Naive thymus-derived CD4-positive, alpha-beta T cell (primary cell): ENCODE measurements at regions of chr10 and their contacts with region 1.

Region 1: DNA sequence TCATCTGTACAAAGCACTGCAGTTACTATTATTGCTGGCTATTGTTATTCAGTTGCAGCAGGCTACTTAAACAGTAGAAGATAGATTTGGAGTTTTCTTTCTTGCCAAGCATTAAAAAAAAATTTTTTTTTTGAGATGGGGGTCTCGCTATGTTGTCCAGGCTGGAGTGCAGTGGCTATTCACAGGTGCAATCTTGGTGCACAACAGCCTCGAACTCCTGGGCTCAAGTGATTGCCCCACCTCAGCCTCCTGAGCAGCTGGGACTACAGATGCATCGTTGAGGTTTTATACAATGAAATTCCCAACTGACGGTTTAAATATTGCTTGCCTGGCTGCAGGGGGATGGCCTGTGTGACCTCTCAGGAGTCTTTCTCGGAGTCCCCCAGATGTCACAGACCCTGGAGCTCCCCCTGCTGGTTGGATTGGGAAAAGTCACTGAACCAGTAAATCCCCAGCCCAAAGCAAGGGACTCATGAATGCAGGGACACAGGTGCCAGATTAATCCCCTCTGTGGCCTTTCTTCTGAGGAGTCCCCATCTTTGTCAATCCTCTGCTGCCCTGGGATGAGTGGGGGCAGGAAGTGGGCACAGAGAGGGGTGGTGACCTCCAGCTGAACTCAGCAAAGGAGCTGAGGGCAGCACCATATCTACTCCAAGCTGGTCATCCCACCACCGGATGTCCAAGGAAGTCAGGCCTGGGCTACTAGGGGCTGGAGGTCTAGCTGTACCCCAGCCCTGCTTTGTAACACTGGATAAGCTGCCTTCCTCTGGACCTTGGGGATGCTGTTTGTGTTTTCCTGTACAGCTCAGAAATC is 149.6 kb downstream of the C10orf105 start:
- DNase-seq: peak; percentile 39 to 81 (median 64)
- ATAC-seq: peak; percentile 67
- H3K4me3 ChIP-seq: no peak overlapping the region
- H3K4me3 Mint-ChIP-seq: no peak overlapping the region
- H3K27ac ChIP-seq: no peak overlapping the region
- H3K27ac Mint-ChIP-seq: no peak overlapping the region
- H3K4me1 ChIP-seq: no peaks in the 10 kb centered on the region
- H3K4me1 Mint-ChIP-seq: peaks cover 0 to 4% (median 0%) of the 10 kb centered on the region in 7 donors
- H3K27me3 ChIP-seq: no peaks in the 10 kb centered on the region
- H3K27me3 Mint-ChIP-seq: no peaks in the 10 kb centered on the region

Region 2: DNA sequence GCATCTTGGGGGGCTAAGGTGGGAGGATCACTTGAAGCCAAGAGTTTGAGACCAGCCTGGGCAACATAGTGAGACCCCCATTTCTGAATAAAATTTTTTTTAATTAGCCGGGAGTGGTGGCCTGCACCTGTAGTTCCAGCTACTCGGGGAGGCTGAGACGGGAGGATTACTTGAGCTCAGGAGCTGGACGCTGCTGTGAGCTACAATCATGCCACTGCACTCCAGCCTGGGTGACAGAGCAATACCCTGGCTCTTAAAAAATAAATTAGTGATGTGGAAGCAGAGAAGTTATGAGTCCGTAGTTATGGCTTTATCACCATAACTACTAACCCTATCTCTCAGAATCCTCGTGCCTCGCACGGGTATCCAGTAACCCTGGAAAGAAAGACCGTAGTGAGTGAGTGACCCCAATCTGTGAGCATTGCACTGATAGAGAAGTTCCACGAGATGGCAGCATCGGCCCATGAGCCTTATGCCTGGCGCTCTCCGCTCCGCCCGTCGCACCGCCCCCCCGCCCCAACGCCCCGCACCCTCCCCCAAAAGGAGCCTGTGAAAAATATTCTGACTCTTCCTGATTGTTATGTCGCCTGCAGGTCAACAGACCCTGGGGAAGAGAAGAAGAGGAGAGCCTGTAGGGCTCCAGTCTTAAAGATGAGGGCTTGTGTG is 255.8 kb before region 1 on chr10:
- CTCF ChIA-PET with region 1: interaction called, 64 read pairs
- POLR2A ChIA-PET with region 1: no interaction called
- intact Hi-C with region 1: loop called (anchors 1 kb)
- DNase-seq: peak; percentile 18 to 56 (median 49)
- ATAC-seq: peak; percentile 62
- H3K4me3 ChIP-seq: no peak overlapping the region
- H3K4me3 Mint-ChIP-seq: peak overlapping the region in 3 of 10 donors; percentile 3 to 48 (median 25)
- H3K27ac ChIP-seq: no peak overlapping the region
- H3K27ac Mint-ChIP-seq: peak overlapping the region in 1 of 9 donors; percentile 55
- H3K4me1 ChIP-seq: peaks cover 5 to 6% of the 10 kb centered on the region in 2 donors
- H3K4me1 Mint-ChIP-seq: peaks cover 0 to 26% (median 13%) of the 10 kb centered on the region in 7 donors
- H3K27me3 ChIP-seq: no peaks in the 10 kb centered on the region
- H3K27me3 Mint-ChIP-seq: peaks cover 0 to 16% (median 14%) of the 10 kb centered on the region in 5 donors

Region 3: GRCh38 chr10:71319042-71319799 is 250.8 kb before region 1 on chr10 and contains the start of gene SLC29A3:
- CTCF ChIA-PET with region 1: interaction called, 64 read pairs
- POLR2A ChIA-PET with region 1: no interaction called
- intact Hi-C with region 1: loop called (anchors 1 kb)
- DNase-seq: peak; percentile 45 to 85 (median 70)
- ATAC-seq: peak; percentile 91
- H3K4me3 ChIP-seq: peak within 1 kb of the TSS; percentile 81
- H3K4me3 Mint-ChIP-seq: peak within 1 kb of the TSS; percentile 85 to 97 (median 94)
- H3K27ac ChIP-seq: peak within 1 kb of the TSS; percentile 62
- H3K27ac Mint-ChIP-seq: peak within 1 kb of the TSS; percentile 71 to 94 (median 85)
- H3K4me1 ChIP-seq: peaks cover 5 to 10% of the 10 kb centered on the region in 2 donors
- H3K4me1 Mint-ChIP-seq: peaks cover 27 to 53% (median 40%) of the 10 kb centered on the region in 7 donors
- H3K27me3 ChIP-seq: no peaks in the 10 kb centered on the region
- H3K27me3 Mint-ChIP-seq: no peaks in the 10 kb centered on the region
- total RNA-seq, gene SLC29A3: 3.5 to 7.2 (median 5.1) TPM

Region 4: DNA sequence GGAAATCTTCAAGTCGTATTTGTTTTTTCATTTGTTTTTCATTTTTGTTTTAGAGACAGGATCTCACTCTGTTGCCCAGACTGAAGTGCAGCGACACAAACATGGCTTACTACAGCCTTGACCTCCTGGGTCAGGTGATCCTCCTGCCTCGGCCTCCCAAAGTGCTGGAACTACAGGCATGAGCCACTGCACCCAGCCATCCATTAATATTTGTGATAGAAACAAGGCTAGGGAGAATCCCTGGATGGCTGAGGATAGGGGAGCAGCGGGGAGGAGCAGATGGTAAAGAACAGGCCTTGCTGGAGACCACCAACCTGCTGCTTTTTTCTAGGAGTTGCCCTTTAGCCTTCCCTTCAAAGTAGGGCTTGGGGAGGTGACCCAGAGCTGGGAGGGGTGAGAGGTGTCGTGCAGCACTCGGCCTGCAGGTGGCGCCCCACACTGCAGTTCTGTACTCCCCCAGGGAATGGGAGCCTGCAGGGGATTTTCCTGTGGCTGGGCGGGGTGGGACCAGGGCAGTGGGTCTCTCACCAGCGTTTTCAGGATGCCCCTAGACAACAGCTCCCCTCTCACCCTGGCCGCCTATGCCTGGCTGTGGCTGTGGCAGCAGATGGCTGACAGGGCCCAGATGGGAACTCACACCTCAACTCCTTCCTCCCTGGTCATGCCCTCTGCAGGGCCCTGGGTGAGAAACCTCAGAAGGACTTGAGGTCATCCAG is 185.9 kb before region 1 on chr10:
- CTCF ChIA-PET with region 1: interaction called, 3 read pairs
- POLR2A ChIA-PET with region 1: no interaction called
- intact Hi-C with region 1: loop called (anchors 1 kb)
- DNase-seq: peak; percentile 40 to 82 (median 61)
- ATAC-seq: peak; percentile 94
- H3K4me3 ChIP-seq: no peak overlapping the region
- H3K4me3 Mint-ChIP-seq: no peak overlapping the region
- H3K27ac ChIP-seq: no peak overlapping the region
- H3K27ac Mint-ChIP-seq: no peak overlapping the region
- H3K4me1 ChIP-seq: no peaks in the 10 kb centered on the region
- H3K4me1 Mint-ChIP-seq: no peaks in the 10 kb centered on the region
- H3K27me3 ChIP-seq: no peaks in the 10 kb centered on the region
- H3K27me3 Mint-ChIP-seq: peaks cover 0 to 24% (median 7%) of the 10 kb centered on the region in 5 donors

Region 5: GRCh38 chr10:71396084-71396720 is 173.8 kb before region 1 on chr10:
- CTCF ChIA-PET with region 1: interaction called, 3 read pairs
- POLR2A ChIA-PET with region 1: no interaction called
- intact Hi-C with region 1: loop called in 1 of 2 experiments (anchors 1 kb)
- DNase-seq: peak in 6 of 9 donors; percentile 18 to 33 (median 26)
- ATAC-seq: peak; percentile 68
- H3K4me3 ChIP-seq: peak overlapping the region; percentile 24
- H3K4me3 Mint-ChIP-seq: peak overlapping the region; percentile 11 to 83 (median 68)
- H3K27ac ChIP-seq: no peak overlapping the region
- H3K27ac Mint-ChIP-seq: no peak overlapping the region
- H3K4me1 ChIP-seq: no peaks in the 10 kb centered on the region
- H3K4me1 Mint-ChIP-seq: peaks cover 0 to 11% (median 4%) of the 10 kb centered on the region in 7 donors
- H3K27me3 ChIP-seq: peaks cover 0 to 16% of the 10 kb centered on the region in 2 donors
- H3K27me3 Mint-ChIP-seq: peaks cover 59 to 76% (median 67%) of the 10 kb centered on the region in 5 donors